AG04450 (cell line): ENCODE measurements at regions of chr11 and their contacts with region 1.

Region 1: GRCh38 chr11:83836883-83837654 is 550.9 kb upstream of the CCDC90B start:
- DNase-seq: no peak
- H3K4me3 ChIP-seq: no peak overlapping the region
- H3K27ac ChIP-seq: no peak overlapping the region
- H3K27me3 ChIP-seq: no peaks in the 10 kb centered on the region
- CTCF ChIP-seq: peak; percentile 88

Region 2: DNA sequence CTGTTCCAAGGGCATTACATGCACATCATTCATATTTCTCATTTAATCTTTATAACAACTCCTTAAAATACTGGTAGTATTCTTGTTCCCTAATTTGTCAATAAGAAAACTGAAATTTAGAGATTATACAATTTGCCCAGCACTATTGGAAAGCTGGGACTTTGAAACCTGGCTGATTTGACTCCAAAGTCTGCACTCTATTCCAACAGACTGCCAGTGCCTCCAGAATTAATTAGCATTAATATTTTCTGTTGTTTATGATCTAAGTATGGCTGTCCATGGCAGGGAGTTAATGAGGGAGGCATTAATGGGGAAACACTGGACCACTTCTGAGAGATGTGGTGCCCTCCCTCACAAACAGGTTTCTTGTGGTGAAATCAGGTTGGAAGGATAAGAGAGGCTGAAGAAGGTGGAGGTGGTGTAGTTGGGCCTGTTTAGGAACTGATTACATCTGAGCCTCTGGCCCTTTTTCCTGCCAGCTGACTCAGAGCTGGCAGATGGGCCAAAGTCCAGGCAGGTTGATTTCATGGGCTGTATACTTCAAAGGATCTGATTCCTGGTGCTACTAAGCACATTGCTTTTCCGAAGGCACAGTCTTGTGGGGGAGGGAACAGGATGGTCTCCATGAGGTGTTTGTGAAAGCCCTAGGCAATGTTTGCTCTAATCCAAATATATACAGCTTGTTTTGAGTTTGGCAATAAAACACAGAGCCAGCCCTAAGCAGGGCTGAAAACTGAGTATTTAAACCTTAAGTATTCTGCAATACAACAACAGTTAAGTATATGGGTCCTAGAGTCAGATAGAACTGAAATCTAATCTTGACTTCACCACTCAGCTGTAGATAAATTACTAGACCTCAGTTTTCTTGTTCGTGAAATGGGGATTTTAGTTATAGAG is 744.3 kb before region 1 on chr11:
- CTCF ChIA-PET with region 1: interaction called, 13 read pairs
- POLR2A ChIA-PET with region 1: no interaction called
- DNase-seq: no peak
- H3K4me3 ChIP-seq: no peak overlapping the region
- H3K27ac ChIP-seq: no peak overlapping the region
- H3K27me3 ChIP-seq: no peaks in the 10 kb centered on the region
- CTCF ChIP-seq: no peak

Region 3: DNA sequence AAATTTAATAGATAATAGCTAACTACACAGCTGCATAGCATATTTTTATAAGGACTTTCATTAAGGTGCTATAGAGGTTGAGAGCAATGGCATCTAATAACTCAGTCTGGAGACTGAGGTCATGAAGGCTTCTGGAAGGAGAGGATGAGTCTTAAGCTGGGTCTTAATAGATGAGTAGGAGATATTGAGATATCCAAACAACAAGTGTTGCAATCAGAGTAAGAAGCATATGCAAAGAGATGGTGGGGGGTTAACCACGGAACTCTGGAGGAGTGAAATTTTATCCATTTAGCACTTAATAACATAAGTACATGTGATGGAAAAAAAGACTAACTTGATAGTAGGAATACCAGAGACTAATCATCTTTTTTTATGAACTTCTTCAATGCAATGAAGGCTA is 148.0 kb before region 1 on chr11:
- CTCF ChIA-PET with region 1: no interaction called
- POLR2A ChIA-PET with region 1: no interaction called
- DNase-seq: no peak
- H3K4me3 ChIP-seq: no peak overlapping the region
- H3K27ac ChIP-seq: no peak overlapping the region
- H3K27me3 ChIP-seq: no peaks in the 10 kb centered on the region
- CTCF ChIP-seq: no peak

Region 4: GRCh38 chr11:83847467-83848034 is 10.5 kb after region 1 on chr11:
- CTCF ChIA-PET with region 1: interaction called, 18 read pairs
- POLR2A ChIA-PET with region 1: no interaction called
- DNase-seq: no peak
- H3K4me3 ChIP-seq: no peak overlapping the region
- H3K27ac ChIP-seq: no peak overlapping the region
- H3K27me3 ChIP-seq: peaks cover 2% of the 10 kb centered on the region
- CTCF ChIP-seq: no peak

Region 5: DNA sequence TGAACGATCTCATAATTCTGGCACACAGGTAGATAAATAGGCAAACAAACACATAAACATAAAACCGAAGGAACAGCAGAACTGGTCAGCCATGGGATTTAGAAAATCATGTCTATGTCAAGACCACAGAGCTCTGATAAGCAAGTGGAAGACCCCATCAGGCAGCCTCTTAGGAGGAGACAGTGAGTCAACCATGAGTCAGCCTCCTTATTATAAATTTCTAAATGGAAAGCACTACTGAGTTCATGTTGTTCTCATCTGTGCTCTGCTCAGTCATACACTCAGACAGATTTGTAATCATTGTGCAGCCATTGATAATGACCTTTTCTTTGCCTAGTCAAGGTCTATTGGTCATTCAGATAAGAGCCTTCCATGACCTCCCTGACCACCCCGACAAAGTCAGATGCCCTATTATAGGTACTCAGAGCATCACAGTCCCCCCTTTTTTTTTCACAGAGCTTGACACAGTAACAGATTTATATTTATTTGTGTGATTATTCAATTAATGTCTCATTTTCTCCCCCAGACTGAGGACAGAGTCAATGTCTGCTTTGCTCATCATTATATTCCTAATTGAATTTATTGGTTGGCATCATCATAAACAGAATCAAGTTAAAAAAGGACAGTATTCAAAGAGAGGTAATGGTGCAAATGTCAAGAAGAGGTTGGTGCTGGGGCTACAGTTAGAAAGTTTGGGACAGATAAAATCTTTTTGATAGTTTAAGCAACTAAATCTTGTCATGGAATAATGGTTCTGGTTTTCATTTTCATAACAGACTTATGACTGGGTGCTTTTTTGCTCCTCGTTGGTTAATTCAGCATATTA is 28.8 kb after region 1 on chr11:
- CTCF ChIA-PET with region 1: no interaction called
- POLR2A ChIA-PET with region 1: no interaction called
- DNase-seq: no peak
- H3K4me3 ChIP-seq: no peak overlapping the region
- H3K27ac ChIP-seq: no peak overlapping the region
- H3K27me3 ChIP-seq: no peaks in the 10 kb centered on the region
- CTCF ChIP-seq: no peak

Region 6: DNA sequence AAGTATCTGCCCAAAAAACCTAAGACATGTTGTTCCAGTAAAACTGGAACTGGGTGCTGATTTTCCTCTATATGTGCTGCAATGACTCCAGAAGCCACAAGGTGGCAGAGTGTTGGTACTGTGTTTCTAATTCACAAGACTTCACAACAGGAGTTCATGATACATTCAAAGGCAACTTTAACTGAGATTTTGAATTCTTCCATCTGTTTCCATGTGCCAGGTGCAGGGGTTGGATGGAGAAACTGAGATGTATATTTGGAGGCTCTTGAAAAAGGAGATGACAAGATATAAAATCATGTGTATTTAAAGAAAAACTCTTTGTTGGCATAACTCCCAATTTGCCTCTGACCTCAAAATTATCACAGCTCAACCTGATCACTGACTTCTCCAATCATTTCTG is 547.7 kb after region 1 on chr11:
- CTCF ChIA-PET with region 1: interaction called, 37 read pairs
- POLR2A ChIA-PET with region 1: no interaction called
- DNase-seq: peak; percentile 3
- H3K4me3 ChIP-seq: no peak overlapping the region
- H3K27ac ChIP-seq: no peak overlapping the region
- H3K27me3 ChIP-seq: no peaks in the 10 kb centered on the region
- CTCF ChIP-seq: peak; percentile 89

Region 7: GRCh38 chr11:84558085-84558905 is 721.2 kb after region 1 on chr11:
- CTCF ChIA-PET with region 1: interaction called, 22 read pairs
- POLR2A ChIA-PET with region 1: no interaction called
- DNase-seq: peak; percentile 4
- H3K4me3 ChIP-seq: no peak overlapping the region
- H3K27ac ChIP-seq: no peak overlapping the region
- H3K27me3 ChIP-seq: no peaks in the 10 kb centered on the region
- CTCF ChIP-seq: peak; percentile 89